ENCODE measurements at regions of chr2 and their contacts with region 1.

Region 1: GRCh38 chr2:31945572-31945935 is 65.3 kb downstream of the MEMO1 start:
- DNase-seq: no peak
- H3K4me3 ChIP-seq: no peak overlapping the region
- CTCF ChIP-seq: no peak
- POLR2A ChIP-seq: no peak

Region 2: GRCh38 chr2:32926708-32927084 is 981.1 kb after region 1 on chr2:
- intact Hi-C with region 1: loop called (anchors 10 kb)
- DNase-seq: no peak
- H3K4me3 ChIP-seq: no peak overlapping the region
- CTCF ChIP-seq: no peak
- POLR2A ChIP-seq: no peak